ENCODE measurements at regions of chr16 and their contacts with region 1.

Region 1: DNA sequence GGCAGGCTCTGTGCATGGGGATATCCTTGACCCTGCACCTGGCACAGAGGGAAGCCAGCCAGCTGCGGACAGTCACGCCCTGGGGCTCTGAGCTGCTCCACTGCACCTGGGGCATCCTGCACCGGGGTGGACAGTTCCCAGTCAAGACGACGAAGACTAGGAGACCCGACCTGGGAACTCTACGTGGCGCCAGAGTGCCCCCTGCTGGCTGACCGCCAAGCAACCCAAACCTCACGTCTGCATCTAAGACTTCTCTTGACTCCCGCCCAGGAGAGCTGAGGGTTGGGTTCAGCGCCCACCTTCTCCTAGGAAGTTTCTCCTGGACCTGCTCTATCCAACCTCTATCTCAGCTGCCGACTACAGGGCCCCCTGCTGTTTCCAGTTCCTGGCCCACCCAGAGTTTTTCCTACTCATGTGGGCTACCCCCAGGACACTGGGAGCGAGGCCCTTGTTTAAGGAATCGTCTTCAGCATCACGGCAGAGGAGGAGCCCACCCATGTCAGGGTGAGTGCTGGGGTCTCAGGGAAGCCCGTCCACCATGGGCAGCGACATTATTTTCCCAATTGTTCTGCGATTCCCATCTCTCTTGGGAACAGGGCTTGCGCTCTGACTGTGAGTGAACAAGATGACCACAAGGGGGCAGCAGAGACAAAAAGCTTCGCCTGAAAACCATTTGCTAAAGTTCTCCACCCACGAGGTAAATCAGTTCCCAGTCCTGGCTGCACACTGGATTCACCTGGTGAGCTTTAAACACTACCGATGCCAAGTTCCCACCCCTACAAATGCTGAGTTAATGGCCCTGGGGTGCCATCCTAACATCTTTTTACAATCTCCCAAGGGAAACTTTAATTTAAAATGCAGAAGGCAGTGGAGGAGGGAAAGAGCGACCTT is 29.3 kb downstream of the TLE7 start:
- DNase-seq: peak; percentile 70 to 89
- ATAC-seq: peak; percentile 86 to 94
- H3K4me3 ChIP-seq: no peak overlapping the region
- H3K27ac ChIP-seq: no peak overlapping the region
- H3K4me1 ChIP-seq: 0 out of 3 replicates have a peak, but pooled peaks cover 3% of the 10 kb centered on the region
- CTCF ChIP-seq: peak; percentile 83
- EP300 ChIP-seq: no peak
- POLR2A ChIP-seq: no peak
- RAD21 ChIP-seq: peak; percentile 74 to 79

Region 2: DNA sequence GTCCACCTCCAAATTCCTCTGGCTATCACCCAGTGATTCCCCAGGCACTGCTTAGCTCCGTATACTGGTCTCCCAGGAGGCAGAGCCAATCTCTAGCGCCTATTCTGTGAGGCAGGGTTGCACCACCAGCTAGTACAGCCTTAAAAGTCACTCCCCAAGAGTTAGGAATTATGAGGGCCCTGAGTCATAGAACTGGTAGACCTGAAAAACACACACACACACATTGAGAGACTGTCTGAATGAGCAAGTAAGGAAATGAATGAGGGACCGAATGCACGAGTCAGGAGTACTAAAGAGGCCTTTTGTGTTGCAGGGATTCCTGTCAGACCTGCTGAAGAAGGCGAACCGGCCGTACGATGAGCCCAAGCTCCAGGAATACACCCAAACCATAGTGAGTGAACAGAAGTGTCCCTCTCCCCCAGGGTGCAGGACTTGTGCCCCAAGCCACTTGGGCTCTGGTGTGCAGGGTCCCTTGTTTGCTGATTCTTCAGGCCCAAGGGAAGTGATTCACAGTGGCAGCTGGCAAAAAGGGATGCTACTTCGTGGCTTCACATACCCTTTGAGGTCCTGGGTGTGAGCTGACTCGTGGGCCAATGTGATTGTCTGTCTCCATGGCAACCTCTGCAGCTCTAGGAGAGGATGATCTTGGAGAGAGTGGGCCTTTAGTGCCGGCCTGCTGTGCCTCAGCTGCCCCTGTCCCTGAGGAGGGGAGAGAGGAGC is 29.3 kb before region 1 on chr16:
- CTCF ChIA-PET with region 1: interaction called, 12 read pairs
- POLR2A ChIA-PET with region 1: no interaction called
- DNase-seq: no peak
- ATAC-seq: peak; percentile 60 to 62
- H3K4me3 ChIP-seq: no peak overlapping the region
- H3K27ac ChIP-seq: no peak overlapping the region
- H3K4me1 ChIP-seq: no peaks in the 10 kb centered on the region
- CTCF ChIP-seq: no peak
- EP300 ChIP-seq: no peak
- POLR2A ChIP-seq: no peak
- RAD21 ChIP-seq: no peak

Region 3: DNA sequence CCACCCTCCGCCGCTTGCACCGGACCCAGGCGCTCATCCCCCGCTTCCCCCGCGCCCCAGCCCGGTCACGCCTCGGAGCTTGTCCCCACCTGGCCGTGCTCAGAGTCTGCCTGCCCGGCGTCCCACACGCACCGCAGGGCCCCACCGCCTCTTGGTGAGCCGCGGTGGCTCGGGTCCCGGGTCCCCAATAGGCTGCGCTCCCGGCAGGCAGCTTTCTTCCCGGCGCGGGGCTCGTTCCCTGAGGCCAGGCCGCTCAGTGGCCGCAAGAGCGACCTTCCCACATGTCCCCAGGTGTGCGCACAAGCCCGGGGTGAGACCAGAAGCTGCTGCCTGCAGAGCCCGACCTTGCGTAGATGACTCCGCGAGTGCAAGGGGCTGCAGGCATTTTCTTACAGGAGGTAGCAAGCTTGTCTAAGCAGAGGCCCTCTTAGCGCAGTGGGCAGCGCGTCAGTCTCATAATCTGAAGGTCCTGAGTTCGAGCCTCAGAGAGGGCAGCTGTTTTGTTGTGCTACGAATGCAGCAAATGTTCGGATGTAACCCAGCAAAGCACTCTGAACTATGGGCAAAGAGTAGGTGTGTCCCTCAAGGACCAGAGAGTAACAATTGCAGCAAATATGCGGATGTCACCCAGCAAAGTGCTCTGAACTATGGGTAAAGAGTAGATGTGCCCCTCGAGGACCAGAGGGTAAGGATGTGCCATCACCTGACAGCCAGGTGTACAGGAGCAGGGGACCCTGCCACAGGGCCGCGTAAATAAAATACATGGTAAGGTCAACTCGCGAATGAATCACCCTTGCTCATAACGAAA is 13.8 kb after region 1 on chr16:
- CTCF ChIA-PET with region 1: interaction called, 40 read pairs
- POLR2A ChIA-PET with region 1: no interaction called
- DNase-seq: peak; percentile 97 to 98
- ATAC-seq: peak; percentile 94 to 97
- H3K4me3 ChIP-seq: peak overlapping the region; percentile 50
- H3K27ac ChIP-seq: peak overlapping the region; percentile 18 to 69; a peak in 2 of 6 replicates
- H3K4me1 ChIP-seq: peaks cover 5% of the 10 kb centered on the region; the same call in 1 of the 3 replicates
- CTCF ChIP-seq: no peak
- EP300 ChIP-seq: no peak
- POLR2A ChIP-seq: no peak
- RAD21 ChIP-seq: no peak

Region 4: GRCh38 chr16:71461686-71462648 is 49.5 kb after region 1 on chr16 and contains the start of gene ZNF23:
- CTCF ChIA-PET with region 1: interaction called, 24 read pairs
- POLR2A ChIA-PET with region 1: no interaction called
- DNase-seq: peak; percentile 85 to 93
- ATAC-seq: peak; percentile 98 to 100
- H3K4me3 ChIP-seq: peak within 1 kb of the TSS; percentile 69
- H3K27ac ChIP-seq: peak within 1 kb of the TSS; percentile 75 to 93
- H3K4me1 ChIP-seq: 0 out of 3 replicates have a peak, but pooled peaks cover 7% of the 10 kb centered on the region
- CTCF ChIP-seq: no peak; the same call in 2 of the 3 replicates
- EP300 ChIP-seq: no peak
- POLR2A ChIP-seq: peak; percentile 96
- RAD21 ChIP-seq: no peak; a peak in 1 of 5 replicates
- polyA plus RNA-seq, gene ZNF23: 6.1 and 8.7 TPM in 2 replicates

Region 5: DNA sequence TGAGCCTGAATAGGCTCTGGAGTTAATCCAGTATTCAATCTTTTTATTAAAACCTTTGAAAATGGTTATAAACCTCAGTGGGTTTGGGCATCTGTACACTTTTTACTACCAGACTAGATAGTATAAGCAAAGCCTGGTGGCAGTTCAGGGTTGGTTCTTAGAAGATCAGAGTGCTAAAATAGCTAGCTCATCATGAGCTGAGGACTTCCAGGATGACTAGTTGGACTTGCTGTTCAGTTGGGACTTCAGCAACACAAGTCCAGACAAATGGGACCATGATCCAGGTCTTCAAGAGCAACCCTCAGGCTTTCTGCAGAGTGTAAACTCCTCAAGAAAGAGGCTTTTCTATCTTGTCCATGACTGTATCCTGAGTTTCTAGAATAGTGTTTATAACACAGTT is 77.8 kb after region 1 on chr16:
- CTCF ChIA-PET with region 1: interaction called, 16 read pairs
- POLR2A ChIA-PET with region 1: no interaction called
- DNase-seq: no peak
- ATAC-seq: no peak
- H3K4me3 ChIP-seq: no peak overlapping the region
- H3K27ac ChIP-seq: no peak overlapping the region
- H3K4me1 ChIP-seq: no peaks in the 10 kb centered on the region
- CTCF ChIP-seq: no peak
- EP300 ChIP-seq: no peak
- POLR2A ChIP-seq: no peak
- RAD21 ChIP-seq: no peak

Region 6: GRCh38 chr16:71537643-71538042 is 125.1 kb after region 1 on chr16:
- CTCF ChIA-PET with region 1: interaction called, 13 read pairs
- POLR2A ChIA-PET with region 1: no interaction called
- DNase-seq: peak; percentile 63 to 64
- ATAC-seq: peak; percentile 92 to 93
- H3K4me3 ChIP-seq: no peak overlapping the region
- H3K27ac ChIP-seq: no peak overlapping the region
- H3K4me1 ChIP-seq: no peaks in the 10 kb centered on the region
- CTCF ChIP-seq: peak; percentile 63
- EP300 ChIP-seq: no peak
- POLR2A ChIP-seq: no peak
- RAD21 ChIP-seq: peak; percentile 61 to 71

Measured in A549 (cell line).